Sciatic nerve (tissue), 2 donors: ENCODE measurements at regions of chr1 and their contacts with region 1.

Region 1: GRCh38 chr1:15272009-15272788 is 25.2 kb downstream of the FHAD1 start:
- DNase-seq: peak; percentile 64
- ATAC-seq: peak; percentile 86

Region 2: GRCh38 chr1:15075817-15076216 is 196.4 kb before region 1 on chr1:
- intact Hi-C with region 1: no loop called
- DNase-seq: no peak
- ATAC-seq: no peak

Region 3: DNA sequence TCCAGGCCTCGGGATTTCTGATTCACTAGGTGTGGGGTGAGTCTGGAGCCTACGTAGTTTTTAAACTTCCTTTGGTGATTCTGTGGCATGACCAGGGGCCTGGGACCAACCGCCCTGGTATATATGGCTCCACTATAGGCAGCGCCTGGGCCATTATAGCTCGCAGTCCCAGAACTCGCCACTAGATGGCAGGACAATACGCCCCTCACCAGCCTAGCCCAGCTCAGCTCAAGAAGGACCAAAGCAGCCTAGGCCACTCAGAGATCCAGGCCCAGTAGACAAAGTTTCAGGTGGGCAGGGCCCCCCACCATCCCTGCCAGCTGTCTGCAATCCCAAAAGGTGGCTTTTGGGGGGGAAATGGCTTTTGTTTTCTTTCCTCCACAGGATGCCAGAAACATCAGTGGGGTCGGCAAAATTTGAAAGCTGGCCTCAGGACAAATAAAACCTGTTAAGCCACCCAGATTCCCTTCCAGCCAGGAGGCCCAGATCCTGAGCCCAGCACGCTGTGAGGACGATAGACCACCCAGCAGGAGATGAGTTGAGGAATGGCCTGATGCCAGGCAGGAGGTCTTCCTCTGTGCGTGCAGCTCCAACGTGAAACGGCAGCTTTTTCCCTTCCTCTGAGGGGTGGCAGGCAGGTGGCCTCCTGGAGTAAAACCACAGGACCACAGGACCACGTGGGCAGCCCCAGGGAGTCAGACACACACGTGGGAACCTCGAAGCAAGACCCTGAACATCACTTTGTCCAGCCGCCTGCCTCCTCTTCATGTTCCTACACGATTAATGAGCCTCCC is 143.5 kb before region 1 on chr1:
- intact Hi-C with region 1: loop called (anchors 5 kb)
- DNase-seq: peak; percentile 84
- ATAC-seq: peak; percentile 90

Region 4: DNA sequence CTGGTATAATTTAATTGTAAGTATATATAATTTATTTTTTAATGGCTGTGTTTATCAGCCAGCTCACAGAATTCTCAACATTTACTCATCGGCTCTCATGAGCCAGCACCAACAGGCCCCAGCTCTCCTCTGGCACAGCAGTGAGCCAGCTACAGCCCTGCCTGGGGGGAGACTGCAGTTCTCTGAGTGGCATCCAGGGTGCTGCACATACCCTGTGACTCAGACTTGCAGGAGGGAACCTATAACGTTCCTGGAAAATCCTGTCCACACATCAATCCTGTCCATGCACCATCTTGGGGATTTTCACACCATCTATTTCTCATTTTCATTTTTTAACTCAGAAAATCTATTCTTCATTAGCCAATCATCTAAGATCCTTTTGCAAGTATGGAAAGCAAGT is 11.3 kb after region 1 on chr1:
- intact Hi-C with region 1: no loop called
- DNase-seq: no peak
- ATAC-seq: no peak

Region 5: GRCh38 chr1:16164213-16165072 is 892.2 kb after region 1 on chr1:
- intact Hi-C with region 1: no loop called
- DNase-seq: no peak
- ATAC-seq: peak; percentile 16